ENCODE measurements at regions of chr21 and their contacts with region 1.

Region 1: DNA sequence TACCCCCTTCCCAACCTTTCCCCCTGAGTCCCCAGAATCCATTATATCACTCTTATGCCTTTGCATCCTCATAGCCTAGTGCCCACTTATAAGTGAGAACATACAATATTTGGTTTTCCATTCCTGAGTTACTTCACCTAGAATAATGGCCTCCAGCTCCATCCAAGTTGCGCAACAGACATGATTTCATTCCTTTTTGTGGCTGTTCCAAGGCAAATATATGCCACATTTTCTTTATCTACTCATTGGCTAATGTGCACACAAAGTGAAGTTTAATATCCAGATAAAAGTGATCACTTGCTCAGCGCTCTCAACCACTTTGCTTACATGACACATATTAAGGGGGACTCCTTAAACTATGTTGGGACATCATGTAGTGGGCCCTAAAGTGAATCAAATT is 72.4 kb upstream of the TIAM1 start:
- DNase-seq: no peak
- ATAC-seq: no peak
- H3K4me3 ChIP-seq: no peak overlapping the region
- H3K27ac ChIP-seq: no peak overlapping the region
- H3K4me1 ChIP-seq: no peaks in the 10 kb centered on the region
- H3K27me3 ChIP-seq: no peaks in the 10 kb centered on the region
- CTCF ChIP-seq: no peak

Region 2: GRCh38 chr21:31366825-31367224 is 49.6 kb before region 1 on chr21:
- intact Hi-C with region 1: loop called in 1 of 10 experiments (anchors 5 kb)
- DNase-seq: no peak
- ATAC-seq: no peak
- H3K4me3 ChIP-seq: no peak overlapping the region
- H3K27ac ChIP-seq: no peak overlapping the region
- H3K4me1 ChIP-seq: no peaks in the 10 kb centered on the region
- H3K27me3 ChIP-seq: no peaks in the 10 kb centered on the region
- CTCF ChIP-seq: no peak

Region 3: DNA sequence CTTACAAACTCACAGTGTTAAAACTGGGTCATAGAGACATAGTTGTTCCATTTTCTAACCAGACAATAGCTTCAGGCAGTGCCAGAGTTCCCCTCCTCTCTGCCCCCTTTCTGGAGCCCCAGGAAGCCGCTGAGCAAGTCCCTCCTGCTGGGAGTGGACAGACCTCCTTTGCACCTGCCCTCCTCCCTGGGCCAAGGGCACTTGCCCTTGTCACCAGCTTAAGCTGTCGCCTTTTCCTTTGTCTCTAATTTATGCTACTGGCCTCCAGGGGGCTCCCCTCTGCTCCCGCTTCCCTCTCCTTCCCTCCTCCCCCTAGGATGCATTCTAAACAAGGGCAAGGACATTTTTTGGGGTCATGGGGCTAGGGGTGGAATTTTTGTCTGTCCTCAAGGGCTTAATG is 679.9 kb after region 1 on chr21:
- intact Hi-C with region 1: no loop called
- DNase-seq: peak in 1 of 2 donors; percentile 17
- ATAC-seq: peak in 4 of 8 donors; percentile 14 to 44 (median 41)
- H3K4me3 ChIP-seq: no peak overlapping the region
- H3K27ac ChIP-seq: no peak overlapping the region
- H3K4me1 ChIP-seq: peaks cover 0 to 5% (median 0%) of the 10 kb centered on the region in 9 donors
- H3K27me3 ChIP-seq: no peaks in the 10 kb centered on the region
- CTCF ChIP-seq: peak in 7 of 9 donors; percentile 28 to 49 (median 37)

Measured in heart right ventricle (tissue), 16 donors.